ENCODE measurements at regions of chr2 and their contacts with region 1.

Region 1: DNA sequence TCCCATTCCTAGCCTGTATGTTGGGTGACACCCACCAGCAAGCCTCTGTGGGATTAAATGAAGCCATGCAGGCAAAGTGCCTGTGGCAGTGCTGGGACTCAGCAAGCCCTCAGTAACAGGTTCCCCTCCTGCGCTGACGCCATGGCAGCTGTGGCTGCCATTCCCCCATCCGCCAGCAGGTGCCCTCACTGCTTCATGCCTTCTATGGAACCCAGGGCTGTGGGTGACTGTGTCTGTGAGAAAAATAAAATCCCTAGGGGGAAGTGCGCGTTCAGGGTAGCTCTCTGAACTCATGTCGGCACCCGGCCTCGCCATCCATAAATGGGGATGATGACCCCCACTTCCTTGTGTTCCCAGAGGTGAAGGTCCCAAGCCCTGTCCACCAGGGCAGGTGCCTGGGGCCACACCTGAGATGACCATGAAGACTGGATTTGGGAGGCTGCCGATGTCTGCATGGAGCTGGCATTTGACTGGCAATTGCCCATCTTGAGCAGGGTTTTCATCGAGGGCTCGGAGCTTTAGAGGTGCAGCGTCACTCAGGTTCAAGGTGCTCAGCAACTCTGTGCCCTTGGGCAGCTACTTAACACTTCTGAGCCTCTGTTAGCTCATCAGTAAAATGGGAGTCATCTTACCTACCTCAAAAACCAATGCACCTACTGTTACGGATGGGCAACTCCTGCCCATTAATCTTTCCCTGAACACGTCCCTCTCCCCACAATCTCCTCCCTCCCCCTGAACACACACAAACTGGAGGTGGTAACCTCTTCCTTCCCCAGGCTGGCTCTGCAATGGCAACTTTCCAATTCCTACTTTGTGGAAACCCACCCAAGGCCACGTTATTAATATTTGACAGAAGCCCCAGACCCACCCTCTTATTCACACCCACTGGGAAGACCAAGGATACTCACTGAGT is 2.9 kb upstream of the MAL start:
- DNase-seq: peak; percentile 92
- ATAC-seq: peak; percentile 55
- H3K4me3 Mint-ChIP-seq: peak overlapping the region; percentile 81
- H3K27ac Mint-ChIP-seq: peak overlapping the region; percentile 82
- H3K4me1 Mint-ChIP-seq: peaks cover 58% of the 10 kb centered on the region
- H3K27me3 Mint-ChIP-seq: no peaks in the 10 kb centered on the region

Region 2: DNA sequence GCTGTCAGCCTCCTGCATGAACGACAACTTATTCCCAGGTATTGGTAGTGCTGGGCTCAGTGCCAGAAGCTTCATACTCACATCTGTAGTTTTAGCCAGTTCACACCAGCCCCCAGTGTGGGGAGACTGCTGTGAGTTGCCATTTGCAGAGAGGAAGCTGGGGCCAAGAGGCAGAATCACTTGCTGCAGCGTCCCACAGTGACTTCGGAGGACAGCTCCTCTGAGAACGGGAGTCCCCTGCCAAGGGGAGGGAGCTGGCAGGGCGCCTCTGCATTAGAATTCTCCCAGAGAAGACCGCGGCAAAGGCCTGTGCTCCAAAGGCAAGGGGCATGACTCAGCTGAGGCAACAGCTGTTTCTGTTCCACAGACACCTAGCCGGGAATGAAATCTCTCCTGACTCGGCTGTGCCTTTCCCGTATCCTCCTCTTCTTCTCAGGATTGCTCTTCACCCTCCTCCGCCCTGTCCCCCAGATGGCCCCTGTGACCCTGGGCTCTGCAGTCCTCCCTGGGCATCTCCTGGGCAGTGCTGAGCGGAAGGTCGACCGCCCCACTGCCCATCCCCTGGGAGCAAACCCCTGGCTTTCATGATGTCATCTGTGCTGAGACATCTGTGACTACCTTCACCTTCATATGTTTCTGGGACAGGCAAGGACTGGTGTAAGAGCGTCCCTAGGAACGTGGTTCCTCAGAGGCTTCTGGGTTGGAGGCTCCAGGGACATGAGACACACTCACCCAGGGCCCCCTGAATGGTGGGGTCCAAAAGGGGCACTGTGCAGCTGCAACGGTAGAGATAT is 20.9 kb after region 1 on chr2:
- CTCF ChIA-PET with region 1: interaction called, 24 read pairs
- POLR2A ChIA-PET with region 1: interaction called, 11 read pairs
- DNase-seq: no peak
- ATAC-seq: no peak
- H3K4me3 Mint-ChIP-seq: no peak overlapping the region
- H3K27ac Mint-ChIP-seq: peak overlapping the region; percentile 44
- H3K4me1 Mint-ChIP-seq: peaks cover 72% of the 10 kb centered on the region
- H3K27me3 Mint-ChIP-seq: no peaks in the 10 kb centered on the region

Region 3: DNA sequence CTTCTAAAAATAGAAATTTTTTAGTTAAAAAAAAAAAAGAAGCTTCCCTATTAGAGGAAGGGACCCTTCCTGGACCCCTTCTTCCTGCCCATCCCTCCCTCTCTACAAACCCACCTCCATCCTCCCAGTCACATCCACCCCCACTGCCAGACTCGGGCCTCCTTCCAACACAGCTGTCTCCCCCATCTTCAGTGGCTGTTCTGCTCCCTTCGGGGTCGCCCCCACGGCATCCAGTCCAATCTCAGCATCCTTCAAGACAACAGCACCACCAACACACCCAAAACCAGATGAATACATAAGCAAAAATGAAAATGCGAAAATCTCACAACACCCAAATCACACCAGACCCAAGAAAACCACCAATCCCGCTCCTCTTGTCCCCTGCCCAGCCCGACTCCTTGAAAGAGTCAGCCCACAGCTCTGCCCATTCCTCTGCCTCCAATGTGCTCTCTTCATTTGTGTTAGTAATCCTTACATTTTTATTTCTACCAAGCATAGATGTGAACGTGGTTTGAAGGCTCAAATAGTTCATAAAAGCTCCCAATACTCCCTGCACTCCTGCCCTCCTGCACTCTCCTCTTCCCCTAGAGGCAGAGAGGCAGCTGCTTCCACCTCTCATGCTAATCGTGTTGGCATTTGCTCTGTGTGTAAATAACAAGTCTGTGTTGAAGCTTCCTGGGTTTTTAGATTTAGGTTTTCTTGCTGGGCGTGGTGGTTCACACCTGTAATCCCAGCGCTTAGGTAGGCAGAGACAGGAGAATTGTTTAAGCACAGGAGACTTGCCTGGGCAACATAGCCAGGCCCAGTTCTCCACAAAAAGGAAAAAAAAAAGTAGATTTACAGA is 39.9 kb after region 1 on chr2:
- CTCF ChIA-PET with region 1: interaction called, 18 read pairs
- POLR2A ChIA-PET with region 1: interaction called, 16 read pairs
- DNase-seq: no peak
- ATAC-seq: peak; percentile 57
- H3K4me3 Mint-ChIP-seq: peak overlapping the region; percentile 11
- H3K27ac Mint-ChIP-seq: peak overlapping the region; percentile 89
- H3K4me1 Mint-ChIP-seq: peaks cover 37% of the 10 kb centered on the region
- H3K27me3 Mint-ChIP-seq: no peaks in the 10 kb centered on the region

Region 4: GRCh38 chr2:95115418-95115817 is 92.9 kb after region 1 on chr2:
- CTCF ChIA-PET with region 1: interaction called, 296 read pairs
- POLR2A ChIA-PET with region 1: interaction called, 16 read pairs
- DNase-seq: peak; percentile 86
- ATAC-seq: peak; percentile 100
- H3K4me3 Mint-ChIP-seq: no peak overlapping the region
- H3K27ac Mint-ChIP-seq: peak overlapping the region; percentile 27
- H3K4me1 Mint-ChIP-seq: peaks cover 44% of the 10 kb centered on the region
- H3K27me3 Mint-ChIP-seq: no peaks in the 10 kb centered on the region

Region 5: GRCh38 chr2:95159690-95160449 is 137.3 kb after region 1 on chr2 and contains the start of gene ZNF514:
- CTCF ChIA-PET with region 1: interaction called, 16 read pairs
- POLR2A ChIA-PET with region 1: interaction called, 3 read pairs
- DNase-seq: peak; percentile 81
- ATAC-seq: peak; percentile 93
- H3K4me3 Mint-ChIP-seq: peak within 1 kb of the TSS; percentile 82
- H3K27ac Mint-ChIP-seq: peak within 1 kb of the TSS; percentile 90
- H3K4me1 Mint-ChIP-seq: peaks cover 28% of the 10 kb centered on the region
- H3K27me3 Mint-ChIP-seq: no peaks in the 10 kb centered on the region
- total RNA-seq, gene ZNF514: 16.3 to 17.4 TPM

Region 6: GRCh38 chr2:95206096-95206495 is 183.5 kb after region 1 on chr2:
- CTCF ChIA-PET with region 1: interaction called, 11 read pairs
- POLR2A ChIA-PET with region 1: no interaction called
- DNase-seq: no peak
- ATAC-seq: no peak
- H3K4me3 Mint-ChIP-seq: peak overlapping the region; percentile 90
- H3K27ac Mint-ChIP-seq: no peak overlapping the region
- H3K4me1 Mint-ChIP-seq: peaks cover 21% of the 10 kb centered on the region
- H3K27me3 Mint-ChIP-seq: no peaks in the 10 kb centered on the region

Region 7: DNA sequence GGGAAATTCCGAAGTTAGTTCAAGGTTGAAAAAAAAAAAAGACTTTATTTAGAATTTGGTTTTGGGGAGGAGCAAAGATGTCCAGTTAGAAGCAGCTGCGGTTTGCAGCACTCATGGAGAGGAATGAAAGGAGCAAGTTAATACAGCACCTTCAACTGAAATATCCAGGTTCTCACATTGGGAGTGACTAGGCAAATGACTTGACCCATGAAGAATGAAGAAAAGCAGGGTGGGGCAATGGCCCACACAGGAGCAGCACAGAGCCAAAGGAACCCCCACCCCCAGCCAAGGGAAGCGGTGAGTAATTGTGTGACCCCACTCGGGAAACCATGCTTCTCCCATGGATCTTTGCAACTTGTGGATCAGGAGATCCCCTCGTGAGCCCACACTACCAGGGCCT is 217.5 kb after region 1 on chr2:
- CTCF ChIA-PET with region 1: no interaction called
- POLR2A ChIA-PET with region 1: no interaction called
- DNase-seq: no peak
- ATAC-seq: no peak
- H3K4me3 Mint-ChIP-seq: no peak overlapping the region
- H3K27ac Mint-ChIP-seq: no peak overlapping the region
- H3K4me1 Mint-ChIP-seq: no peaks in the 10 kb centered on the region
- H3K27me3 Mint-ChIP-seq: no peaks in the 10 kb centered on the region

Measured in activated CD8-positive, alpha-beta T cell treated with anti-CD3 and anti-CD28 coated beads, Interleukin-2, amount 10 ng/mL, durations not matched to agents 7 days and 5 days (primary cell).